A549 (cell line): ENCODE measurements at regions of chr17 and their contacts with region 1.

Region 1: GRCh38 chr17:8173056-8173870 is 2.9 kb downstream of the TMEM107 start:
- DNase-seq: peak; percentile 89 to 100
- ATAC-seq: peak; percentile 77 to 85
- H3K4me3 ChIP-seq: peak overlapping the region; percentile 41
- H3K27ac ChIP-seq: peak overlapping the region; percentile 86 to 88
- H3K4me1 ChIP-seq: peaks cover 34% of the 10 kb centered on the region
- CTCF ChIP-seq: 0 out of 3 replicates have a peak, but pooled peaks have one; percentile 9
- EP300 ChIP-seq: peak; percentile 12 to 44; a peak in 1 of 5 replicates
- POLR2A ChIP-seq: peak; percentile 100
- RAD21 ChIP-seq: peak in 1 of 2 experiments; percentile 23; a peak in 1 of 5 replicates

Region 2: GRCh38 chr17:8118769-8119580 is 54.3 kb before region 1 on chr17:
- CTCF ChIA-PET with region 1: interaction called, 4 read pairs
- POLR2A ChIA-PET with region 1: interaction called, 41 read pairs
- DNase-seq: peak; percentile 87 to 90
- ATAC-seq: peak; percentile 33 to 71
- H3K4me3 ChIP-seq: peak overlapping the region; percentile 51
- H3K27ac ChIP-seq: peak overlapping the region; percentile 67 to 90
- H3K4me1 ChIP-seq: peaks cover 13% of the 10 kb centered on the region
- CTCF ChIP-seq: peak; percentile 97
- EP300 ChIP-seq: no peak
- POLR2A ChIP-seq: no peak
- RAD21 ChIP-seq: peak; percentile 58 to 75

Region 3: GRCh38 chr17:8138672-8139371 is 34.4 kb before region 1 on chr17:
- CTCF ChIA-PET with region 1: interaction called, 7 read pairs
- POLR2A ChIA-PET with region 1: interaction called, 25 read pairs
- DNase-seq: peak; percentile 93 to 99
- ATAC-seq: peak; percentile 86 to 94
- H3K4me3 ChIP-seq: peak overlapping the region; percentile 58
- H3K27ac ChIP-seq: peak overlapping the region; percentile 82 to 86
- H3K4me1 ChIP-seq: peaks cover 22% of the 10 kb centered on the region
- CTCF ChIP-seq: peak; percentile 98
- EP300 ChIP-seq: peak in 1 of 2 experiments; percentile 27; a peak in 1 of 5 replicates
- POLR2A ChIP-seq: peak; percentile 47; the same call in 1 of the 2 replicates
- RAD21 ChIP-seq: peak; percentile 90 to 93

Region 4: GRCh38 chr17:8156246-8156992 is 16.8 kb before region 1 on chr17:
- CTCF ChIA-PET with region 1: interaction called, 16 read pairs
- POLR2A ChIA-PET with region 1: interaction called, 43 read pairs
- DNase-seq: peak; percentile 100
- ATAC-seq: peak; percentile 57 to 73
- H3K4me3 ChIP-seq: peak overlapping the region; percentile 65
- H3K27ac ChIP-seq: peak overlapping the region; percentile 89 to 93
- H3K4me1 ChIP-seq: peaks cover 55% of the 10 kb centered on the region
- CTCF ChIP-seq: no peak
- EP300 ChIP-seq: no peak
- POLR2A ChIP-seq: peak; percentile 54
- RAD21 ChIP-seq: peak; percentile 33 to 40; a peak in 2 of 5 replicates

Region 5: DNA sequence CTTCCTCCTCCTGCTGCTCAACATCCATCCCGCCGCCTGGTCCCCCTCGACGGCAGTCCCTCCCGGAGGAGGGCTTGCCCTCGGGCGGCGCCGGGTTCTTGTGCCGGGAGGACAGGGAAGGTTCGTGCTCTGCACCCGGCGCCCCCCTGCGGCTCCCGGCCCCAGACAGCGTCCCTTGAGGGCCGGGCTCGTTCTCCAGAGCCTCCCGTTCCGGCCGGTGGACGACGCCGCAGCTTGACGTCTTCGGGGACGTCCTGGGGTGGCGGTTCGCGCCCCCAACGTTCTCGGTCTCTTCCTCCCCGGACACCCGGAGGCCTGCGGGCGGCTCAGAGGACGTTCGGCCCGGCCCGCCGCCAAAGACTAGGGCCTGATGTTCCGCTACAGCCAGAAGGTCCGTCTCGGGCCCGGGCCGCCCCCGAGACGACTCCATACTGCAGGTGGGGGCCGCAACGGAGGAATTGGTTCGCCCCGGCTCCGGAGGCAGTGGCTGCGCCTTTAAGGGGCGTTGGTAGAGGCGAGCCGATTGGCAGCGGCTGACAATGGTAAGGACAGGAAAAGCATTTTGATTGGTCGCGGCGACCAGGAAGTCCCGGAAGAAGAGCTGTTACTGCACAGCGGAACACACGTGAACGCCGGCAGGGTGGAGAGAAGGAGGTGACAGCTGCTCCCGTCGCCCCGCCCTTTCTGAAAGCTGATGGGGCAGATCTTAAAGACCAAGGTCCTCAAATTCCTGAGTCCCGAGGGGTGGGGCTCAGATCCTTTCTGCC is 16.6 kb after region 1 on chr17 and contains the start of gene BORCS6:
- CTCF ChIA-PET with region 1: interaction called, 14 read pairs
- POLR2A ChIA-PET with region 1: interaction called, 45 read pairs
- DNase-seq: peak; percentile 97 to 99
- ATAC-seq: peak; percentile 41 to 68
- H3K4me3 ChIP-seq: peak within 1 kb of the TSS; percentile 71
- H3K27ac ChIP-seq: peak within 1 kb of the TSS; percentile 88 to 89
- H3K4me1 ChIP-seq: peaks cover 40% of the 10 kb centered on the region
- CTCF ChIP-seq: peak; percentile 19; the same call in 1 of the 3 replicates
- EP300 ChIP-seq: no peak
- POLR2A ChIP-seq: peak; percentile 65
- RAD21 ChIP-seq: no peak
- polyA plus RNA-seq, gene BORCS6: 3.0 and 3.3 TPM in 2 replicates

Region 6: DNA sequence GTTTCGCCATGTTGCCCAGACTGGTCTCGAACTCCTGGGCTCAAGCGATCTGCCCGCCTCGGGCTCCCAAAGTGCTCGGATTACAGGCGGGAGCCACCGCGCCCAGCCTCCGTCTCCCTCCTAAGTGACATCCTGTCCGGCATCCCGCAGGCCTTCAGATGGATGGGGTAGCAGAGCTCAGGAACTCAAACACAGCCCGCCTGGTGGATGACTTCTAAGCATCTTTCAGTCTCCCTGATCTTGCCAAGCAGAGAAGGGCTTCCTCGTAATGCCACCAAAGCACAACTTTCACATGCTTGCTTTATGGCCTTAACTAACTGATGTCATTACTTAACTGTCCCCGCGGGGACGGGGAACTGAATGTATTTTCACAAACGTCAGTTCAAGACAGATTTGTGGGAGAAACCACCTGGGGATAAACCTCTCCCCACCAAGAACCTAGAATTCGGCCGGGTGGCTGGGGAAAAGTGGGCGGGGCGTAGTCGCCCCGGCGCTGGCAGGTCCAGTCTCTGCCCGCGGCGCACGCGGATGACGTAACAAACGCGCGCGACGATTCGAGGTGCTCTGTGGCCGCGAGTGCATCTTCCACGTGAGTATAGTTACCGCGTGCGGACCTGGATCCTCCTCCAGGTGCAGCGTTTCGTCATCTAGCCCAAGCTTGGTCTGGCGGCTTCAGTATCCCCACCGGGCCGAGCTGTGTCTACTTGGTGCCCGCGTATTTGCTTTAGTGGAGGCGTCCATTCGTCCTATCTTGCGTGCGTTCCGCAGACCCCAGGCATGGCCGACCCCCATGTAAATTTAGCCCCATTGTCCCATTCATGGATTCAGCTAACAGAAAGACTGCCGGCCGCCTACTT is 75.7 kb after region 1 on chr17 and contains the start of gene PFAS:
- CTCF ChIA-PET with region 1: no interaction called
- POLR2A ChIA-PET with region 1: interaction called, 11 read pairs
- DNase-seq: peak; percentile 97
- ATAC-seq: peak; percentile 62 to 69
- H3K4me3 ChIP-seq: peak within 1 kb of the TSS; percentile 74
- H3K27ac ChIP-seq: peak within 1 kb of the TSS; percentile 97 to 99
- H3K4me1 ChIP-seq: peaks cover 8% of the 10 kb centered on the region
- CTCF ChIP-seq: no peak
- EP300 ChIP-seq: no peak
- POLR2A ChIP-seq: peak; percentile 91
- RAD21 ChIP-seq: no peak
- polyA plus RNA-seq, gene PFAS: 51.9 and 64.5 TPM in 2 replicates